Ovary (tissue), 10 donors: ENCODE measurements at regions of chr15 and their contacts with region 1.

Region 1: DNA sequence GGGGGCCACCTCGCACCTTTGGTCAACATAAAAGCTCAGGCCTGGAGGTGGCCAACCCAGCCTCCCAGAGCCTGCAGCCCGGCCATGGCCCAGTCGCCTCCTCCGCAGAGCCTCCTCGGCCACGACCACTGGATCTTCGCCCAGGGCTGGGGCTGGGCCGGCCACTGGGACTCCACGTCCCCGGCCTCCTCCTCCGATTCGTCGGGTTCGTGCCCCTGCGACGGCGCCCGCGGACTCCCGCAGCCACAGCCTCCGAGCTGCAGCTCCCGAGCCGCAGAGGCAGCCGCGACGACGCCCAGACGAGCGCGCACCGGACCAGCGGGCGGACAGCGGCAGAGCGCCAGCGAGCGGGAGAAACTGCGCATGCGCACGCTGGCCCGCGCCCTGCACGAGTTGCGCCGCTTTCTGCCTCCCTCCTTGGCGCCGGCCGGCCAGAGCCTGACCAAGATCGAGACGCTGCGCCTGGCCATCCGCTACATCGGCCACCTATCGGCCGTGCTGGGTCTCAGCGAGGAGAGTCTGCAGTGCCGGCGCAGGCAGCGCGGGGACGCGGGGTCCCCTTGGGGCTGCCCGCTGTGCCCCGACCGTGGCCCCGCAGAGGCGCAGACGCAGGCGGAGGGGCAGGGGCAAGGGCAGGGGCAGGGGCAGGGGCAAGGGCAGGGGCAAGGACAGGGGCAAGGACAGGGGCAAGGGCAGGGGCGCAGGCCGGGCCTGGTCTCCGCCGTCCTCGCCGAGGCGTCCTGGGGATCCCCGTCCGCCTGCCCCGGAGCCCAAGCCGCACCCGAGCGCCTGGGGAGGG is at the start of gene MESP2:
- DNase-seq: peak; percentile 81 to 92 (median 85)
- H3K4me3 ChIP-seq: peak within 1 kb of the TSS; percentile 41
- H3K27ac ChIP-seq: no peak within 1 kb of the TSS
- H3K4me1 ChIP-seq: no peaks in the 10 kb centered on the region
- H3K27me3 ChIP-seq: no peaks in the 10 kb centered on the region
- CTCF ChIP-seq: peak in 2 of 3 donors; percentile 56 to 67
- EP300 ChIP-seq: no peak
- POLR2A ChIP-seq: no peak
- total RNA-seq, gene MESP2: not detected

Region 2: DNA sequence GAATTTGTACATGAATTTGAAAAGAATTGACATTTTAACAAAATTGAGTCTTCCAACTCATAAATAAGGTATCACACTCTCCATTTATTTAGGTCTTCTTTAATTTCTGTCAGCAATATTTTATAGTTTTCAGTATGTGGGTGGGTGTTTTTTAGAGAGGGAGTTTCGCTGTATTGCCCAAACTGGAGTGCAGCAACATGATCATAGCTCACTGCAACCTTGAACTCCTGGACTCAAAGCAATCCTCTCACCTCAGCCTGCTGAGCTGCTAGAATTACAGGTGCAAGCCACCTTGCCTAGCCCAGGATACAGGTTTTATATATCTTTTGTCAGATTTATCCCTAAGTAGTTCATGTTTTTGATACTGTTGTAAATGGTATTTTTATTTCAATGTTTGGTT is 81.3 kb before region 1 on chr15:
- intact Hi-C with region 1: no loop called
- DNase-seq: no peak
- H3K4me3 ChIP-seq: no peak overlapping the region
- H3K27ac ChIP-seq: no peak overlapping the region
- H3K4me1 ChIP-seq: no peaks in the 10 kb centered on the region
- H3K27me3 ChIP-seq: no peaks in the 10 kb centered on the region
- CTCF ChIP-seq: no peak
- EP300 ChIP-seq: no peak
- POLR2A ChIP-seq: no peak

Region 3: DNA sequence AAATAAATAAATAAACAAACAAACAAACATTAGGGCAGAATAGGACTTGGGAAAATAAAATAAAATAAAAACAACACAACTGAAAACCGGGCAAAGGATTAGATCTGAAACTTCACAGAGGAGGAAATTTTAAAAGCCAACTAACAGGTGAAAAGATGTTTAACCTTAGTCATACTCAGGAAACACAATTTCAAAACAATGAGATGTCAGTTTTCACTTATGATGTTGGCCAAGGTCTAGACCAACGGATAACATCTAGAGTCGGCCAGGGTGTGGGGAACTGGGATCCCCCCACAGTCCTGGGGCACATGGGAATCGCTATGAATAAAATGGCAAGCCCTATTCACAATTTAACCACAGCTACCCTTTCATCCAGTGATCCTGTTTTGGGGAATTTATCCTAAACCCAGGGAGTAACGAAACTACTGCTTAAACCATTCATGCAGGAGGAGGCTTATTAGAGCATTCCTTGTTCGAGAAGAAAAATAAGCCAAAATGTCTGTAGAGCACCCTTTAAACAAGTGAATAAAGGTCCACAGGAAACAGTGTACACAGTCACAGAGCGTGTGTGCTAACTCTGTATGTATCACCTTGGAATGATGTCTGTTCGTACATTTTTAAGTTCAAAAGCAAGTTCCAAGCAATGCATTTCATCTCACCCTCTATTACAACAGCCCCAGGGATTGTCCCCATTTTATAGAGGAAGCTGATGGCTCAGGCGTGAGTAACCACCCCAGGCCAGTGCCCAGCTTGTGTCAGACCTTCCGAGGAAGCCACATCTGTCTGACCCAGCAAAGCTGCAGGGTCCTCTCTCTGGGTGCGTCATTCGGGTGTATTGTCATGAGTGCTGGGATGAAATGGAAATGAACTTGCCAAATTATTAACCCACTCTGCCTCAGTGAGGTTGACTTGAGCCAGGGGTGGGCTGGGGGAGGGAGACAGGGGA is 44.5 kb after region 1 on chr15:
- intact Hi-C with region 1: no loop called
- DNase-seq: no peak
- H3K4me3 ChIP-seq: no peak overlapping the region
- H3K27ac ChIP-seq: no peak overlapping the region
- H3K4me1 ChIP-seq: no peaks in the 10 kb centered on the region
- H3K27me3 ChIP-seq: no peaks in the 10 kb centered on the region
- CTCF ChIP-seq: no peak
- EP300 ChIP-seq: no peak
- POLR2A ChIP-seq: no peak

Region 4: DNA sequence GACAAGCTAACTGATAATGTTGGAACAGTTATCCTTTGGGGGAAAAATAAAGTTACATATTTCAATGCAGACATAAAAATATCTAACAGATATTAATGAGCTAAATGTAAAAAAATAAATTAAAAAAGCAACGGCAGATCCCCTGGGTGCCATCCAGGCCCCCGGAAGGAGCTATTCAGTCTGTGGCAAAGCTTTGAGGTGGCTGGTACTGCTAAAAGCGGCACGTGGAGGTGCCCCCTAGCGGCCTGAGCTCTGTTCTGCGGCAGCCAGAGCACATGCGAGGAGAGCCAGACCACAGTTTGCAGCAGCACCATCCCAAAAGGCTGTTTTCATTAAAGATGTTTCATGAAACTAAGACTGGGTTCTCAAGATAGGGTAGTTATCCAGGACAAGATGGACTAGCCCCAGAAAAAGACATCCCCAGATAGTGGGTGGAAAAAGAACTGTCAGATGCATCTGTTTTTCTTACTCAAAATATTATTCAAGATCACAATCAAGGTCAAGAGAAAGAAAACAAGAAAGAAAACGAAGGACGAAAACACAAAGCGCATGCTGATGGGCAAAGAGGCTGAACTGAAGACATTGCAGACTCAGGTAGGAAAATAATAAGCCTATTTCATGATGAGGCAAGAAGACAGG is 98.6 kb after region 1 on chr15:
- intact Hi-C with region 1: loop called in 1 of 4 experiments (anchors 10 kb)
- DNase-seq: peak; percentile 70 to 86 (median 81)
- H3K4me3 ChIP-seq: no peak overlapping the region
- H3K27ac ChIP-seq: no peak overlapping the region
- H3K4me1 ChIP-seq: peaks cover 4% of the 10 kb centered on the region
- H3K27me3 ChIP-seq: no peaks in the 10 kb centered on the region
- CTCF ChIP-seq: peak; percentile 53 to 66 (median 66)
- EP300 ChIP-seq: no peak
- POLR2A ChIP-seq: no peak